GM10248 (cell line): ENCODE measurements at regions of chr22 and their contacts with region 1.

Region 1: DNA sequence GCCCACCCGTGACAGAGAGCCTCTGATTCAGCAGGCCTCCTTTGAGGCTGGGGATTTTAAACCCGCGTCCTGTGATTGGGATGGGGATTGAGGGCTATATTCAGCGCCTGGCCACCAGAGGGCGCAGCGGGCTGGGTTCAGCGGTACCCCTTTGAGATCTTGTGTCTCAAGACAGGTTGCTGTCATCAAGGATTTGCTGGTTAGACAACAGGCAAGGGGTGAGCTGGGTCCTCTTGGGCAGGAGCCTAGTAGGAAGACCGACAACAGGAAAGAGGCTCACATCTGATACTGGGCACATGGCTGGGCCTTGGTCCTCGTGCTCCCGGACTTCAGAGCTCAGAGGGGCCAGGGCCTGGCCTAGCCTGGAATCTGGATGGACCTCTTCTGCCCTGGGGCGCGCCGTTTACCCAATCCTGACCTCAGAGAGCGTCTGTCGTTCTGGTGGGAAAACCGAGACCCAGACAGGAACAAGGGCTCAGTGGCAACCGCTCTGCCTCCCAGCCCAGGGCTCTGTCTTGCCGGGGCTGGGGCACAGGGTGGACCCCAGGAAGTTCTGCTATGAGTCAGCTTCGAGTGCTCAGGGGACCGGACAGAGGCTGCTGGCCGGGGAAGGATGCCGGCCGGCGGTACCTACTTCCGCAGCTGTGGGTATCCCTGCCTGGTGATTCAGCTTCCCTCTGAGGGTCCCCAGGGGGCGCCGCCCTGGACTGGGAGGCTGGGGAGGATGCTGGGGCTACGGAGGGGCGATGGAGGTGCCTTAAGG is 929 bp upstream of the SLC35E4 start:
- DNase-seq: peak; percentile 92
- CTCF ChIP-seq: peak; percentile 97

Region 2: GRCh38 chr22:30606455-30607299 is 28.0 kb before region 1 on chr22 and contains the start of gene TCN2:
- CTCF ChIA-PET with region 1: interaction called, 58 read pairs
- POLR2A ChIA-PET with region 1: no interaction called
- DNase-seq: peak; percentile 73
- CTCF ChIP-seq: no peak

Region 3: GRCh38 chr22:30649430-30650007 is 14.9 kb after region 1 on chr22:
- CTCF ChIA-PET with region 1: interaction called, 67 read pairs
- POLR2A ChIA-PET with region 1: no interaction called
- DNase-seq: peak; percentile 86
- CTCF ChIP-seq: no peak

Region 4: DNA sequence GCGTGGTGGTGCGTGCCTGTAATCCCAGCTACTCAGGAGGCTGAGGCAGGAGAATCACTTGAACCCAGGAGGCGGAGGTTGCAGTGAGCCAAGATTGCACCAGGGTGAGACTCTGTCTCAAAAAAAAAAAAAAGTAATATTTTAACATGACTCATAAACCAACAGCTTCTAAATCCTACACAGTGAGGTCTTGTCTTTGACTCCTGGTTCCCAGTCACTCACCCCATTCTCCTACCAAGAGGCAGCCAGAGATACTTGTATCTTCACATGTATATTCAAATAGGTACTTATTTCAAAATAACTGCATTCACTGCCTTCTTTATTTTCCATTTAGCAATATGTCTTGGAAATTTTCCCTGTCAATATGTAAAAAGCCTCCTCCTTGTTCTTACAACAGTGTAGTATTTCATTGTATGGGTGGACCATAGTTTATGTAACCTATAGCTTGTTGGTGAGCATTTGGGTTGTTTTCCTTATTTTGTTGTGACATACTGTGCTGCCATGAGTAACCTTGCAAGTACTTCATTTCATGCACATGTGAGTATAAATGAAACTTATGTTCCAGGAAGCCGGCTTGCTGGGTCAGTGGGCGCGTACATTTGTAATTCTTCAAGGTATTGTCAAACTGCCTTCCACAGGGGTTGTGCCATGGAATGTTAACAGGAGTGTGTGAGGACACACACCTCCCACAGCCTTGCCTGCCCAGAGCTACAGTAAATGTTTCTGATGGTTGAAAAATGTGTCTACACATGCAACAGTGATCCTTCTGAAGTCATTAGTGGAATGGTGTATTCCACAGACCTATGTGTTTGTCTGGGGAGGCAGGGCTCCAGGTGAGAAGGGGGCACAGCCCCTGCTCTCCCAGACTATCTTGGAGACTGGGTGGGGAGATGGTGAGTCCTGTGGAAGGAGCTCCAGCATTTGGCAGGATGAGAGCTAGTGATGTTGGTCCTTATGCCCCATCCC is 107.9 kb after region 1 on chr22:
- CTCF ChIA-PET with region 1: interaction called, 22 read pairs
- POLR2A ChIA-PET with region 1: no interaction called
- DNase-seq: no peak
- CTCF ChIP-seq: no peak

Region 5: DNA sequence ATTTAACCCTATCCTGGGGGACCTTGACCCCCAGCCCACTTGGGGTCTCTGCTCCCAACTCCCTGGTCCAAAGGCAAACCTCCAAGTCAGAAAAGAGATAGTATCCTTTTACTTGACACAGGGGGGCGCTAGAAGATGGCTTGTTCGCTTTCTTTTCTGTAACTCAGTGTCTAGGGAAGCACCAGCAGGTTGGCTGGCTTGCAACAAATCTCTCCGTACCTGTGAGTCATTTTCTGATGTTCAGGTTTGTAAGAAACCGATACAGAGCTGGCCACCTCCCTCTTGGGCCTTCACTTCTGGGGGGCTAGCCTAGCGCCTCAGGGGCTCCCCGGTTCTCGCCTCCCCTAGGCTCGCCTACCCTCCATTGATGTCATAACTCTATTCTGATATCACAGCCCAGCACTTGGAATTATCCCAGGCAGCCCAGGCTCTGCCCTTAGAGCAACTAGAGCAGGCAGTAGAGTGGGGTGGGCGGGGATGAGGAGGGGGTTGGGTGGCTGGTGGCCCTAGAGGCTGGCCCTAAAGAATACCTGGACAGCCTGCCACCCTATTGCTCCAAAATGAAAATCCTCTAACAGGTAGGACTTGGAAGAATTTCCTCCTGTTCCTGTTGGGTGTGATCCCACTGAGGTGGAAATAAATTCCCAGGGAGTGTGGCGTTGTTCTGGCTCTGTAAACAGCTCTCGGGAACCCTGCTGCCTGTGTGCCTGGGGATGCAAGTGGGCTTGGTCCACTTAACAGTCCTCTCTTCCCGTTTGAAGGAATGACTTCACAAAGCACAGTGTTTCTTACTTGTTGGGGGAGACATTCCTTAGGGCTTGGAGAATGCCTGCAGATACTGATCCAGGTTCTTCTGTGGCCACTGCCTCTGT is 129.4 kb after region 1 on chr22:
- CTCF ChIA-PET with region 1: interaction called, 208 read pairs
- POLR2A ChIA-PET with region 1: no interaction called
- DNase-seq: peak; percentile 75
- CTCF ChIP-seq: peak; percentile 55

Region 6: DNA sequence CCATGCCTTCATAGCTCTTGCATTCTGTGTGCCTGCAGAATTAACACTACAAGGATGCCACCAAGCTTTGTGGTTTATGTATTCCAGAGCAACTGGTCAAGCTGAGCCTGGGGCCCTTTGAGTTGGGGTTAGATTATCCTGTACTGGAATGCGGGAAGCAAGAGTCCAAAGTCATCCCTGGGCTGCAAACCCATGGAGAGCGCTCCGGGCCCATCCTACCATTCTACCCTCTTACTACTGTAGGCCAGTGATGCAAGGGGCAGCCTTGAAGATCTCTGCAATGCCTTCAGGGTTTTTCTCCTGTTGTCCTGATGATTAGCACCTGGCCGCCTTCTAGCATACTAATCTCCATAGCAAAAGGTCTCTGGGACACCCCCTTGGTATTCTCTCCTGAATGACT is 385.7 kb after region 1 on chr22:
- CTCF ChIA-PET with region 1: no interaction called
- POLR2A ChIA-PET with region 1: no interaction called
- DNase-seq: no peak
- CTCF ChIP-seq: no peak